ENCODE measurements at regions of chr2 and their contacts with region 1.

Region 1: GRCh38 chr2:174341286-174341994 is 6.7 kb downstream of the SP9 start:
- DNase-seq: peak; percentile 30
- ATAC-seq: peak; percentile 88
- H3K4me3 ChIP-seq: peak overlapping the region; percentile 32; the same call in 1 of the 2 replicates
- H3K27ac ChIP-seq: no peak overlapping the region
- H3K4me1 ChIP-seq: peaks cover 16% of the 10 kb centered on the region
- H3K27me3 ChIP-seq: peaks cover 11 to 41% of the 10 kb centered on the region in 2 experiments
- CTCF ChIP-seq: peak; percentile 93 to 99 (median 98); a peak in 5 of 6 replicates
- EP300 ChIP-seq: no peak
- POLR2A ChIP-seq: no peak
- RAD21 ChIP-seq: peak; percentile 94

Region 2: DNA sequence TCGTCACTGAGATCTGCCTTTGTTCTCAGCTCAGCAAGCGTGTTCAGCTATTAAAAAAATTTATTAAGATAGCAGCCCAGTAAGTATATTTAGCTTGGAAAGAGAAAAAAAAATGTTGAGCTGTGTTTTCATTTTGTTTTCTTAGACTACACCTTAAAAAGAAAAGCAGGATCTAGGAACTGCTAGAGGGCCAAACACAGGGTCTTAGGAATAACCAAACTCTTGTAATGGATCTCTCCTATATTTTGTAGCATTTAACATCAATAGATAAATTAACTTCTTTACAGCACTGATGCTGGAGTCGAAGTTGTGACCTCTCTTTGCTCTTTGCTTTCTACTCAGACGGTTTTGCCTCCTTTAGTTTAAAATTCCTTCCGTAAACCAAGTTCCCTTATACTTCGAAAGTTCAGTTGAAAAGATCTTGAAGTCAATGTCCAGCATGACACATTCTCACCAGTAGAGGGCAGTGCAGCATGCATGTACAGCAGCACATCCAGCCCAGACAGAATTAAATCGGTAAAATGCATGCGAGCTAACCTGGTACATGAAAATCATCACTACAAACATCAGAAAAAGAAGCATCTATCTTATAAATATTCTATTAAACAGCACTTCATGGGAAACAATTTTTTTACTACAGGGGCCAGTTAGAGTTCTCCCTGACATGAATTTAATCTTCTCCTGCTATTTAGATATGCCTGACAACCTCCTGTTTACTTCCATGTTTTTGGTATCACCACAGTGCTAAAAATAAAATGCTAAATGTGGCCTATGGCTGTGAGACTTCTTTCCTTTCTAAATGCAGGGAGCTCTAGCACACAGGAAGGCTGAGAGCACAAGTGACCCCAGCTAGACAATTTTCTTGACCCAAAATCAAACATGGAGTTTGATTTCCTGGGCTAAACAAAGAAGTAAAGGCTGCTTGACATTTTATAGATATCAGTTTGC is 1314.0 kb before region 1 on chr2:
- CTCF ChIA-PET with region 1: interaction called, 19 read pairs
- POLR2A ChIA-PET with region 1: no interaction called
- RAD21 ChIA-PET with region 1: interaction called, 5 read pairs
- SMC1A ChIA-PET with region 1: interaction called, 5 read pairs
- in situ Hi-C with region 1: no loop called
- intact Hi-C with region 1: loop called (anchors 5 kb)
- DNase-seq: peak; percentile 41
- ATAC-seq: peak; percentile 85
- H3K4me3 ChIP-seq: no peak overlapping the region
- H3K27ac ChIP-seq: no peak overlapping the region
- H3K4me1 ChIP-seq: no peaks in the 10 kb centered on the region
- H3K27me3 ChIP-seq: peaks cover 0 to 2% of the 10 kb centered on the region in 2 experiments; a peak in 2 of 4 replicates
- CTCF ChIP-seq: peak; percentile 84 to 95 (median 92)
- EP300 ChIP-seq: no peak
- POLR2A ChIP-seq: no peak
- RAD21 ChIP-seq: peak; percentile 98

Region 3: DNA sequence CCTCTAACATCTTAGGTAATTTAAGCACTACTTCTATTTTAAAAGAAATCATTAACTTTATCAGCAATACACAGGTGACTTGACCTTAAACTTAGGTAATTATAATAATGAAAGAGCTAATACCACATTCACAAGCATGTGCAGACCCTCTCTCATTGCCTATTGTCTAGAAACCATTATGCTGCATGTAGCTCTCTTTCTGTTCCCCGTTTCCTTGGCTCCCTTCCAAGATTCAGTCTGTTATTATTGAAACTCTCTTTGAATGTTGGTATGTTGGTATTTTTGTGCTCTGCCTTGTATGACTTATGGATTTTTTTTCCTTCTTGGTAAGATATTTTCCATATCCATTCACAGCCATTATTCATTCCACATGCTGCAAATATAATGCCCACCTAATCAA is 785.6 kb before region 1 on chr2:
- CTCF ChIA-PET with region 1: no interaction called
- POLR2A ChIA-PET with region 1: no interaction called
- RAD21 ChIA-PET with region 1: no interaction called
- SMC1A ChIA-PET with region 1: no interaction called
- in situ Hi-C with region 1: no loop called
- intact Hi-C with region 1: loop called (anchors 10 kb)
- DNase-seq: no peak
- ATAC-seq: no peak
- H3K4me3 ChIP-seq: no peak overlapping the region
- H3K27ac ChIP-seq: no peak overlapping the region
- H3K4me1 ChIP-seq: no peaks in the 10 kb centered on the region
- H3K27me3 ChIP-seq: peaks cover 0 to 3% of the 10 kb centered on the region in 2 experiments; a peak in 2 of 4 replicates
- CTCF ChIP-seq: no peak
- EP300 ChIP-seq: no peak
- POLR2A ChIP-seq: no peak
- RAD21 ChIP-seq: no peak

Region 4: DNA sequence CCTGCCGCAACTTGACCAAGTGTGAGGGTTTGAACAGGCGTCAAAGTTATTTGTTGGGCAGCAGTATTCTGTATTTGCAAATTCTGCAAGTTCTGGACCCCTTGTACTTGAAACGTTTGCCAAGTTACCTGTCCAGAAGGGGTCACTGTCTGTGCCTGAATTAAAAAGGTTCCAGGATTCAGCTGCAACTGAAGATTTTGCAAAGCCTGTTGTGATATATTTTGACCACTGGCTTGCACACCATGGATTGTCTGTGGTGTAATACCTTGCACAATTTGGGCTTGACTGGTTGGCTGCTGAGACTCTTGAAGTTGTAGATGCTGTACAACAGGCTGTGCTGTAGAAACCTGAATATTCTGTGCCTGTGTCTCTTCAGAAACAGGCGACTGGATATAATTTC is 386.4 kb before region 1 on chr2:
- CTCF ChIA-PET with region 1: no interaction called
- POLR2A ChIA-PET with region 1: no interaction called
- RAD21 ChIA-PET with region 1: interaction called, 3 read pairs
- SMC1A ChIA-PET with region 1: no interaction called
- in situ Hi-C with region 1: no loop called
- intact Hi-C with region 1: loop called (anchors 10 kb)
- DNase-seq: no peak
- ATAC-seq: peak; percentile 7
- H3K4me3 ChIP-seq: no peak overlapping the region; the same call in 1 of the 2 replicates
- H3K27ac ChIP-seq: no peak overlapping the region
- H3K4me1 ChIP-seq: 0 out of 2 replicates have a peak, but pooled peaks cover 3% of the 10 kb centered on the region
- H3K27me3 ChIP-seq: no peaks in the 10 kb centered on the region
- CTCF ChIP-seq: 0 out of 6 replicates have a peak, but pooled peaks of 1 of the 3 experiments have one; percentile 9
- EP300 ChIP-seq: no peak
- POLR2A ChIP-seq: no peak
- RAD21 ChIP-seq: 0 out of 2 replicates have a peak, but pooled peaks have one; percentile 17

Region 5: GRCh38 chr2:174138161-174138560 is 203.3 kb before region 1 on chr2:
- CTCF ChIA-PET with region 1: interaction called, 26 read pairs
- POLR2A ChIA-PET with region 1: no interaction called
- RAD21 ChIA-PET with region 1: interaction called, 9 read pairs
- SMC1A ChIA-PET with region 1: interaction called, 11 read pairs
- in situ Hi-C with region 1: no loop called
- intact Hi-C with region 1: loop called (anchors 5 kb)
- DNase-seq: no peak
- ATAC-seq: no peak
- H3K4me3 ChIP-seq: no peak overlapping the region
- H3K27ac ChIP-seq: no peak overlapping the region
- H3K4me1 ChIP-seq: no peaks in the 10 kb centered on the region
- H3K27me3 ChIP-seq: no peaks in the 10 kb centered on the region
- CTCF ChIP-seq: peak in 1 of 3 experiments; percentile 21; a peak in 1 of 6 replicates
- EP300 ChIP-seq: no peak
- POLR2A ChIP-seq: no peak
- RAD21 ChIP-seq: no peak

Region 6: DNA sequence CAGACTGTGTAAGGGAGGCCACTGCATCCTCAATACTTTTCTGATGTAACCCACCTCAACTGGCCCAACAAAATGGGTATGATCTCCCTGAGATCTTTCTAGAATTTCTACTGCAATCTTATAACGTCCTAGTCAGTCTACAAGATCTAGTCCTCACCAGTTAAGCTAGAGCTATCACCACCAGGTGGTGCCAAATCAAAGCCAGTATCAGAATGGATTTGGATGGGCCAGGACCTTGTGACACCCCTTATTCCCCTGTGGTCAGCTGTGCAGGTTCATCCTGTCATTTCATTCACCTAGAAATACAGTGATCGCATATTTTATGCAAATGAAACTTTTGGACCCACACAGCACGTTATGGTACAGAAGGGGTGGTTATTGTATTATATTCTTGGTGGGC is 183.4 kb before region 1 on chr2:
- CTCF ChIA-PET with region 1: interaction called, 82 read pairs
- POLR2A ChIA-PET with region 1: no interaction called
- RAD21 ChIA-PET with region 1: interaction called, 45 read pairs
- SMC1A ChIA-PET with region 1: interaction called, 19 read pairs
- in situ Hi-C with region 1: loop called (anchors 5 kb)
- intact Hi-C with region 1: loop called (anchors 1 kb)
- DNase-seq: peak; percentile 16
- ATAC-seq: peak; percentile 98
- H3K4me3 ChIP-seq: no peak overlapping the region
- H3K27ac ChIP-seq: no peak overlapping the region
- H3K4me1 ChIP-seq: no peaks in the 10 kb centered on the region
- H3K27me3 ChIP-seq: no peaks in the 10 kb centered on the region
- CTCF ChIP-seq: peak; percentile 60 to 69 (median 67)
- EP300 ChIP-seq: no peak
- POLR2A ChIP-seq: no peak
- RAD21 ChIP-seq: peak; percentile 66

Measured in GM12878 (cell line).